Activated B cell treated with CpG ODN at 0.5 μM for 24 hours (primary cell): ENCODE measurements at regions of chr1 and their contacts with region 1.

Region 1: DNA sequence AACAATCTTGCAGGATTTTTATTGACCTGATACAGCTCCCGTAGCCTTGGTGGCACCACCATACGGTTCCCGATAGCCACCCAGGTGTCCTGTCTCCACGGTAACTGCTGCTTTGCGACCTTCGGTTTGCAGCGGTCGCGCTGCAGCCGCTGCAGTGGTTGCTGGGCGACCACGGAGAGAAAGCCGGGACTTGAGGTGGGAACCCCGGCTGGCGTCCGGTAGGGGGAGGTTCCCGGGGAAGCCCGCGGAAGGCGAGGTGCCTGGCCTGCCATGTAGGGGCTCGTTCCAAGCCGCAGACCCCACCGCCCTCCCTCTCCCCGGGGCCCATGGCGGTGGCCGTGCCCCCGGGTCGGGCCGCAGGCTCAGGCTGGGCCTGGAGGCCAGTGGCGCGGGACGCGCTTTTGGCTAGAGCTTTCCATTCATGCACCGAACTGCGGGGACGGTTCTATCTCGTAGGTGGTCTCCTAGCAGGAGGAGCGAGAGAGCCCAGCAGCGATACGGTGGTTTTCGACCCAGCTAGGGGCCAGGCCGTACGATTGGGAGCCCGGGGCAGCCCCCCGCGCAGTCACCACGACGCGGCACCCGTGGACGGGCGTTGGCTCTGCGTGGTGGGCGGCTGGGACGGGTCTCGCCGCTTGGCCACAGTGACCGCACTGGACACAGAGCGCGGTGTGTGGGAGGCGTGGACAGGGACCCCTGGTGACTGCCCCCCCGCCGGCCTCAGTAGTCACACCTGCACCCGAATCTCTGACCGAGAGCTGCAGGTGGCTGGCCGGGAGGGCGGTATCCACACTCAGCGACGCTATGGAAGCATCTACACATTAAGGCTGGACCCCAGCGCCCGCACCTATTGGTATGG is at the start of gene KLHDC9:
- DNase-seq: peak; percentile 77
- ATAC-seq: peak; percentile 79
- H3K4me3 Mint-ChIP-seq: peak within 1 kb of the TSS; percentile 88
- H3K27ac Mint-ChIP-seq: peak within 1 kb of the TSS; percentile 93
- H3K4me1 Mint-ChIP-seq: peaks cover 36% of the 10 kb centered on the region
- H3K27me3 Mint-ChIP-seq: no peaks in the 10 kb centered on the region
- CTCF ChIP-seq: peak; percentile 11
- total RNA-seq, gene KLHDC9: 2.9 and 3.6 TPM in 2 replicates

Region 2: GRCh38 chr1:160813215-160813614 is 285.2 kb before region 1 on chr1:
- CTCF ChIA-PET with region 1: no interaction called
- POLR2A ChIA-PET with region 1: no interaction called
- intact Hi-C with region 1: no loop called
- DNase-seq: no peak
- ATAC-seq: no peak
- H3K4me3 Mint-ChIP-seq: no peak overlapping the region
- H3K27ac Mint-ChIP-seq: peak overlapping the region; percentile 13
- H3K4me1 Mint-ChIP-seq: peaks cover 22% of the 10 kb centered on the region
- H3K27me3 Mint-ChIP-seq: no peaks in the 10 kb centered on the region
- CTCF ChIP-seq: no peak

Region 3: GRCh38 chr1:160837558-160838205 is 260.8 kb before region 1 on chr1:
- CTCF ChIA-PET with region 1: interaction called, 8 read pairs
- POLR2A ChIA-PET with region 1: no interaction called
- intact Hi-C with region 1: loop called (anchors 1 kb)
- DNase-seq: peak; percentile 66
- ATAC-seq: peak; percentile 97
- H3K4me3 Mint-ChIP-seq: no peak overlapping the region
- H3K27ac Mint-ChIP-seq: peak overlapping the region; percentile 84
- H3K4me1 Mint-ChIP-seq: peaks cover 36% of the 10 kb centered on the region
- H3K27me3 Mint-ChIP-seq: no peaks in the 10 kb centered on the region
- CTCF ChIP-seq: no peak

Region 4: DNA sequence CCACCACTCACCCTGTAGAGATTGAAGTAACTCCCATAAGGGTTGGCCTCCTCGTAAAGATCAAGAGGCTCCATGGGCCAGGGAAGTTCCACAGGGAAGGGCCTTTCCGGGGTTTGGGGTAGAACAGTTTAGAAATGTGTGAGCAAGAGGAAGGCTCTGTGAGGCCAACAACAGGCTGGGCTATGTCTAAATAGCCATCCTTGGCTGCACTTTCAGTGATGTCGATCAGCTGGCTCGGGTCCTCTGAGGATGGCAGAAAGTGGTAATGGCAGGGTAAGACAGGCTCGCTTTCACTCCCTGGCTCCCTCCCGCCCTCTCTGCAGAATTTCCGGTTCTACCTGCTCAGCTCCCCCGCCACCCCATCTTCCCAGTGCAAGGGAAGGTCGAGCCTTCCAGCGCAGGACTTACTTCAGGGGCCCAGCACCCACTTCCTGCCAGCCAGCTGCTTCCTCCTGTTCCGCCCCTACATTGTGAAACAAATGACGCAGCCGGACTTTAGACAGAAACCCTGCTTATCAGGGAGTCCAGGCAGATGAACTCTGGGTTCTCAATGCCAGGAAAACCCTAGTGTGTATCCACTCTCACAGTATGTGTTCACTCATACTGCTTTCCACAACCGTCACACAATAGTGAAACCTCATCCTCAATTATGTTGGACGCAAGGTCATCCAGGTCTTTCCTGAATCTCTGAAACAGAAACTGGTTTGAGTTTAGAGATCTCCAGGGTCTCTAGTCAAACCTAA is 84.8 kb before region 1 on chr1:
- CTCF ChIA-PET with region 1: no interaction called
- POLR2A ChIA-PET with region 1: interaction called, 4 read pairs
- intact Hi-C with region 1: loop called (anchors 5 kb)
- DNase-seq: peak; percentile 55
- ATAC-seq: peak; percentile 84
- H3K4me3 Mint-ChIP-seq: peak overlapping the region; percentile 87
- H3K27ac Mint-ChIP-seq: peak overlapping the region; percentile 98
- H3K4me1 Mint-ChIP-seq: peaks cover 23% of the 10 kb centered on the region
- H3K27me3 Mint-ChIP-seq: no peaks in the 10 kb centered on the region
- CTCF ChIP-seq: no peak

Region 5: DNA sequence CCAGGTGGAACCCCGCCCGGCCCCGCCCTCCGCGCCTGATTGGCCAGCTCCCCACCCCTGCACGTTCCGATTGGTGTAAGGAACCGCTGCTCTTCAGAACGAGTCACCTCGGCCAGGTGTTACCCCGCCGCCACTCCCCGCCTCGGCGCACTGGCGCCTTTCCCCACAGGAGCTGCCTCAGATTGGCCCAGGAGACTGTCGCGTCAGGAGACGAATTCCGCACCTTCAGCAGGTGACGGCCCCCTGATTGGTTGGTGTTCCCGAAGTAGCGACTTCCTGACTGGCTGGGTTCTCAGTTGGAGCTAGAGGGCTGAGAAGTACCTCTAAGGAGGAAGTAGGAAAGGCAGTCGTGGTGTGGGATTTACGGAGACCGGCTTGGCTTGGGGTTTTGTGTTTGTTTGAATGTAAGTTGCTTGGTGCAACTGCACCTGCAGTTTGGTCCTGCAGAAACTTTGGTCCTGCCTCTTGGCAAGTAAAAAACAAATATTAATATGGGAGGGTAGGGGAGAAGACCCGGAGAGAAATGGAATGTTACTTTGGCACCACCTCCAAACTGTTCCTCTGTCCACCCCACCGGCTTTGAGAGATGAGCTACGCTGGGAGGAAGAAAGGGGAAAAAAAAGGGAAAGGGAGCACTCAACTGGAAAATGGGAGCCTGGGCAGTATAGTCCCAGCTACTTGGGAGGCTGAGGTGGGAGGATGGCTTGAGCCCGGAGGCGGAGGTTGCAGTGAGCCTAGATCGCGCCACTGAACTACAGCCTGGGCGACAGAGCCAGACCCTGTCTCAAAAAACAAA is 77.1 kb before region 1 on chr1:
- CTCF ChIA-PET with region 1: interaction called, 10 read pairs
- POLR2A ChIA-PET with region 1: interaction called, 16 read pairs
- intact Hi-C with region 1: no loop called
- DNase-seq: peak; percentile 74
- ATAC-seq: peak; percentile 92
- H3K4me3 Mint-ChIP-seq: peak overlapping the region; percentile 95
- H3K27ac Mint-ChIP-seq: peak overlapping the region; percentile 91
- H3K4me1 Mint-ChIP-seq: peaks cover 27% of the 10 kb centered on the region
- H3K27me3 Mint-ChIP-seq: no peaks in the 10 kb centered on the region
- CTCF ChIP-seq: no peak

Region 6: GRCh38 chr1:161038523-161039153 is 59.8 kb before region 1 on chr1 and contains the start of gene TSTD1:
- CTCF ChIA-PET with region 1: interaction called, 31 read pairs
- POLR2A ChIA-PET with region 1: interaction called, 79 read pairs
- intact Hi-C with region 1: loop called (anchors 1 kb)
- DNase-seq: peak; percentile 80
- ATAC-seq: peak; percentile 84
- H3K4me3 Mint-ChIP-seq: peak within 1 kb of the TSS; percentile 91
- H3K27ac Mint-ChIP-seq: peak within 1 kb of the TSS; percentile 95
- H3K4me1 Mint-ChIP-seq: peaks cover 53% of the 10 kb centered on the region
- H3K27me3 Mint-ChIP-seq: no peaks in the 10 kb centered on the region
- CTCF ChIP-seq: no peak
- total RNA-seq, gene TSTD1: 69.8 and 70.2 TPM in 2 replicates

Region 7: GRCh38 chr1:161117759-161118581 is 19.5 kb after region 1 on chr1 and contains the starts of genes NIT1 and PFDN2:
- CTCF ChIA-PET with region 1: interaction called, 3 read pairs
- POLR2A ChIA-PET with region 1: interaction called, 43 read pairs
- intact Hi-C with region 1: loop called (anchors 1 kb)
- DNase-seq: peak; percentile 84
- ATAC-seq: peak; percentile 77
- H3K4me3 Mint-ChIP-seq: peak within 1 kb of the TSS; percentile 92
- H3K27ac Mint-ChIP-seq: peak within 1 kb of the TSS; percentile 89
- H3K4me1 Mint-ChIP-seq: peaks cover 87% of the 10 kb centered on the region
- H3K27me3 Mint-ChIP-seq: no peaks in the 10 kb centered on the region
- CTCF ChIP-seq: no peak
- total RNA-seq, gene NIT1: 40.5 and 43.9 TPM in 2 replicates
- total RNA-seq, gene PFDN2: 43.8 and 67.9 TPM in 2 replicates